Esophagus squamous epithelium (tissue), 5 donors: ENCODE measurements at regions of chr7 and their contacts with region 1.

Region 1: DNA sequence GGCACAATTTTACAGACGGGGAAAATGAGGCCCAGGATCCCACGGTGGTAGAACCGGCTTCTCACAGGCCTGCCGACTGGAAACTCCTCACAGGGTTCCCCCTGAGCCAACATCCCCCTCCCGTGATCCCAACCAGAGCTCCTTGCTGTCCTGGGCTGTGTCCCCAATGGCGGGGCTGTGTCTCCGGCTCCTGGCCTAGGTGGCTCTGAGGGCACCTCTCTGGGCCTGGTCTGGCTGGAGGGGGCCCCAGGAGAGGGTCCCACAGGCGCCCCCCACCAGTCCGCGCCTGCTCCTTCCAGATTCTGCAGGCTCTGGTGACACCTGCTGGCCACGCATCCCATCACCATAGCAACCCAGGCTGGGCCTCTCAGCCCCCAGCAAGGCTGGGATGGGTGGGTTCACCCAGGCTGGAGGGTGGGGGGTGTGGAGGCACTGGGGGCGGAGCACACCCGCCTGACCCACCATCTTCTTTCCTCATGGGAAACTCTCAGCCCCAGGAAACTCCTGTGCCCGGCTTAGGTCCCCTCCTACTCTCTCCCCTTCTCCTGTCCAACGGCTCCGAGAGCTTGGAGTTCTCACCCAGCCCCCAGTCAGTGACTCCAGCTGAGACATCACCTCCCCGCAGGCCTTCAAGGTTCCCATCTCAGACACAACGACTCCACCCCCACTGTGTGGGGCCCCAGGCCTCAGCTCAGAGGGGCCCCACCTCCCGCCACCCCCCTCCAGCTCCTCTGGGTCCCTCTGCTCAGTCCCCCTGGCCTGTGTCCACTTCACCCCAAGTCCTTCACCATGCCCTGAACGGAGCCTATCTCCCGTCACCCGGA is 27.1 kb upstream of the TNRC18 start:
- DNase-seq: no peak
- H3K4me3 ChIP-seq: no peak overlapping the region
- H3K27ac ChIP-seq: no peak overlapping the region
- H3K4me1 ChIP-seq: peaks cover 0 to 35% (median 0%) of the 10 kb centered on the region in 3 donors
- H3K27me3 ChIP-seq: peaks cover 0 to 23% (median 0%) of the 10 kb centered on the region in 4 donors
- CTCF ChIP-seq: peak in 5 of 6 experiments; percentile 42 to 69 (median 61)
- POLR2A ChIP-seq: no peak

Region 2: DNA sequence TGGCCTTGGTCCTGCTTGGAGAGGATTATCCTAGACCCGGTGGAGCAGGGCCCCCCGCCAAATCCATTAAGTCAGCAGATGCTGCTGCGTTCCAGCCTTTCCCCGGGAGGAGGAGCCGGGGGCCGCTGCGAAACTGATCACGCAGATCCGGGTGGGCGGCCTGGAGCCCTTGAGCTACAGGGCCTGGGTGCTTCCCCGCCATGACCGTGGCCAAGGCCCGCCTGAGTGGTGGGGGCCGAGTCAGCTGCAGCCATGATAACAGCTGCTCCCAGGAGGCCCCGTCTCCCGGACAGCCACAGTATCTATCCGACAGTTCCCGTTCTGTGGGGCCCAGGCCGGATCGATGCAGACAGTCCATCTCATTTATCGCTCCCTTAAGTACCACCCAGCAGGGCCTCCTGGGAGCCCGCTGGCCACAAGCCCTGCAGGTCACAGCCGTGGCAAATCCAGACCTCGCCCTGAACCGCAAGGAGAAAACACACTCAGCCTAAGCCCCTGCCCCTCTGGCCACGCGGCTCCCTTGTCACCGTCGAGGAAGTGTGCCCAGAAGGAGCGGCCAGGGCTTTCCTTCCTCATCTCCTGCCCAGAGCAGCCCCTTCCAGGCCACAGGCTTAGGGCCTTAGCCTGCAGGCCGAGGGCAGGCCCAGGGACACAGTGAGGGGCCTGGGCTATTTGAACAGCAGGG is 202.4 kb before region 1 on chr7:
- intact Hi-C with region 1: loop called (anchors 10 kb)
- DNase-seq: no peak
- H3K4me3 ChIP-seq: no peak overlapping the region
- H3K27ac ChIP-seq: peak overlapping the region in 3 of 4 donors; percentile 29 to 60 (median 54)
- H3K4me1 ChIP-seq: peaks cover 0 to 8% (median 0%) of the 10 kb centered on the region in 3 donors
- H3K27me3 ChIP-seq: peaks cover 0 to 3% (median 0%) of the 10 kb centered on the region in 4 donors
- CTCF ChIP-seq: no peak
- POLR2A ChIP-seq: no peak

Region 3: DNA sequence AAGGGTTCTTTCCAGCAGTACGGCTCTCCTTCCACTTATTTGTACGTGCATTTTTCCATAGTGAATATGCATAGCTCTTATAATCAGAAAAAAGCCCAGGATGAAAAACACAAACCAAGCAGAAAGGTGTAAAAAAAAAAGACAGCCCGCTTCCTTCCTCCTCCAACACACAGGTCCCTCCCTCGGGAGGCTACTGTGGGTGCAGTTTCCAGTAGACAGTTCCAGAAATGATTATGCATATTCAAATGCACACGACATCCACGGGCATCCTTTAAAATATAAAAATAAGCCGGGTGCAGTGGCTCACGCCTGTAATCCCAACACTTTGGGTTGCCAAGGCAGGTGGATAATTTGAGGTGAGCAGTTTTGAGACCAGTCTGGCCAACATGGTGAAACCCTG is 87.0 kb before region 1 on chr7:
- intact Hi-C with region 1: loop called (anchors 10 kb)
- DNase-seq: no peak
- H3K4me3 ChIP-seq: no peak overlapping the region
- H3K27ac ChIP-seq: no peak overlapping the region
- H3K4me1 ChIP-seq: peaks cover 0 to 61% (median 0%) of the 10 kb centered on the region in 3 donors
- H3K27me3 ChIP-seq: no peaks in the 10 kb centered on the region
- CTCF ChIP-seq: no peak
- POLR2A ChIP-seq: no peak

Region 4: GRCh38 chr7:5396999-5397663 is 53.6 kb before region 1 on chr7:
- intact Hi-C with region 1: loop called (anchors 10 kb)
- DNase-seq: peak; percentile 59
- H3K4me3 ChIP-seq: peak overlapping the region; percentile 32 to 73 (median 50)
- H3K27ac ChIP-seq: peak overlapping the region; percentile 87 to 94 (median 92)
- H3K4me1 ChIP-seq: peaks cover 24 to 62% (median 26%) of the 10 kb centered on the region in 3 donors
- H3K27me3 ChIP-seq: no peaks in the 10 kb centered on the region
- CTCF ChIP-seq: no peak
- POLR2A ChIP-seq: peak in 2 of 4 donors; percentile 39 to 72